ENCODE measurements at regions of chr9 and their contacts with region 1.

Region 1: GRCh38 chr9:111759762-111760639 is 34.7 kb downstream of the SHOC1 start:
- DNase-seq: peak in 1 of 3 donors; percentile 48
- ATAC-seq: peak; percentile 89 to 99 (median 96)
- H3K4me3 ChIP-seq: no peak overlapping the region
- H3K27ac ChIP-seq: no peak overlapping the region
- H3K4me1 ChIP-seq: no peaks in the 10 kb centered on the region
- H3K27me3 ChIP-seq: no peaks in the 10 kb centered on the region
- CTCF ChIP-seq: peak; percentile 65 to 88 (median 72)
- POLR2A ChIP-seq: no peak

Region 2: DNA sequence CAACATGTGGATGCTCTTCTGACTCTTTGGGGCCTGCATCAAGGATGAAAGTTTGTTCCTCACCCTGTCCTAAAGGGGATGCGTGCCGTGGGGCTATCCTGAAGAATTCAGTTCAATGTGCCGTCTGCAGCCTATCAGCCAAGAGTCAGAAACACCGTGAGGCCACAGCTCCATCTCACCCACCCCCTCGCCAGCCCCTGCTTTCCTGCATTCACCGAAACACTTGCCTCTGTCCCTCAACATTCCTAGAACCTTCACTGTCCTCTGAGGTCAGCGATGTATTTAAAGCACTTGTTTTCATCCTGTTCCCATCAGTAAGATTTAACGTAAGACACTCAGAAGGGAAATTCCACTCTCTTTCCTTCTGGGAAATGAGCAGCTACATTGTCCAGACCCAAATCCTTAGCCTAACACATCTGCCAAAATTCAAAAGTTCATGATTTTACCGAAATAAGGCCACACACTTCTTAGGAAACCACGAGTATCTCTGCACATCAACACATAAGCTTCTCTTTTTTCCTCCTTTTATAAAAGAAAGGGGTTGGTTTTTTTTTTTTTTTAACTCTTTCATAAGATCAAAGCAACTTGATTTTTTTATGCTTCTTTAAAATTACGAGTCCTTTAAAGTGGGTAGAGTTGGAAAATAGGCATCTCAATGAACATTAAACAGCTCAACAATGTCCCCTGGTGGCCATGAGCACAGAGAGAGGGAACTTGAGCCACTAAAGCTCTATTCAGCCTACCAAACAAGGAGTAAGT is 314.4 kb after region 1 on chr9:
- intact Hi-C with region 1: loop called in 1 of 2 experiments (anchors 10 kb)
- DNase-seq: peak in 2 of 3 donors; percentile 64 to 67
- ATAC-seq: peak; percentile 77 to 88 (median 86)
- H3K4me3 ChIP-seq: no peak overlapping the region
- H3K27ac ChIP-seq: peak overlapping the region; percentile 6 to 74 (median 67)
- H3K4me1 ChIP-seq: peaks cover 0 to 8% (median 0%) of the 10 kb centered on the region in 4 donors
- H3K27me3 ChIP-seq: no peaks in the 10 kb centered on the region
- CTCF ChIP-seq: peak; percentile 85 to 98 (median 88)
- POLR2A ChIP-seq: no peak

Region 3: DNA sequence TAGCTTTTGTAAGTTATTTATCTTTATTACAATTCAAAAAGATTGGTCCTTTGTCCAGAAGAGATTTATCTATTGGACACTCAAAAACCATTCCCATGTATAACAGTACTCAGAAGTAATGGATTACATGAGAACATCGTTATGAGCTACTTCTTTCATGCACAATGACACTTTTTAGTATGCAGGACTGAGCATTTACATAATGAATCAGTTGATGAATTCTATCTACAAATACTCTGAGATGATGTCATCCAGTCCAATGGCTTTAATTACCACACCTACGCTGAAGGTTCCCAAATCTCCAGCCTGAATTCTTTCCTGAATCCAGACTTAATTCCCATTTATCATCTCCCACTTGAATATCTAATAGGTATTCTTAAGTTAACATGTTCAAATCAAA is 498.1 kb after region 1 on chr9:
- intact Hi-C with region 1: no loop called
- DNase-seq: no peak
- ATAC-seq: no peak
- H3K4me3 ChIP-seq: no peak overlapping the region
- H3K27ac ChIP-seq: no peak overlapping the region
- H3K4me1 ChIP-seq: no peaks in the 10 kb centered on the region
- H3K27me3 ChIP-seq: no peaks in the 10 kb centered on the region
- CTCF ChIP-seq: no peak
- POLR2A ChIP-seq: no peak

Measured in right lobe of liver (tissue), 6 donors.